ENCODE measurements at regions of chr5 and their contacts with region 1.

Region 1: GRCh38 chr5:115831163-115831768 is 10.1 kb downstream of the ATG12 start:
- DNase-seq: no peak
- H3K4me3 ChIP-seq: no peak overlapping the region
- H3K27ac ChIP-seq: no peak overlapping the region
- H3K4me1 ChIP-seq: peaks cover 0 to 3% of the 10 kb centered on the region in 2 donors
- H3K27me3 ChIP-seq: no peaks in the 10 kb centered on the region
- CTCF ChIP-seq: peak; percentile 48 to 79 (median 75)

Region 2: DNA sequence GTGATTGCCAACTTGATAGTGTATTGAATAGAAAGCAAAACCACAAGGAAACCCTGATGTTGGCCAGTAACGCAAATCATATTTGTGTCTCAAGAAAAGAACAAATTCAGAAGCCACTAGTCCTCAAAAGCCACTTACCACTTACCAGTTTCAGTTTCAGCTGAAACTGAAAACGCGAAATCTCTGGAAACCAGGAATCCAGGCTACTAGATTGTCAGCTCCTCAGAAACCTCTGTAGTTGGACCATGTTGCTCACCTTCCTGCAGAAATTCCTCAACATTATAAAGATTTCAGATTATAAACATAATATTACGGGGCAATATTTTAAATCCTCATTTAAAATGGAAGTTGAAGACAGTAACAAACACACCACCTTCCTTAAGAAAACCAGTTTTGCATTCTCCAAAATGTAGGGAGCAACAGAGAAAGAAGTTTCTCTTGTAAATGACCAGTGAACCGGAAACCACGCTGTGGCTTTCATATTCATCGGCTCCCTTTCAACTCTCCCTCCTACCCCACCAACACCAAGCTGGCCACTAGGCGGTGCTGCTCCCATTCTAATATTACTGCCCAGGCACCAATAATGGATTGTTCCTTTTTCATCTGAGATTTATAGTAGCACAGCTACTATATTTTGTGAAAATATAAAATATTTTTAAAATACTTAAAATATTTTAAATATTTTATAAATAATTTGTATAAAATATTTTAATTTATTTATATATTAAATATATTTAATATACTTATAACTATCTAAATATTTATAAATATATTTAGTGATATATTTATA is 196.7 kb before region 1 on chr5:
- intact Hi-C with region 1: loop called (anchors 2 kb)
- DNase-seq: peak; percentile 24 to 94
- H3K4me3 ChIP-seq: peak overlapping the region; percentile 52 to 59
- H3K27ac ChIP-seq: peak overlapping the region; percentile 40 to 83
- H3K4me1 ChIP-seq: no peaks in the 10 kb centered on the region
- H3K27me3 ChIP-seq: no peaks in the 10 kb centered on the region
- CTCF ChIP-seq: peak; percentile 84 to 89 (median 88)

Region 3: GRCh38 chr5:115810761-115811160 is 20.5 kb before region 1 on chr5:
- intact Hi-C with region 1: no loop called
- DNase-seq: no peak
- H3K4me3 ChIP-seq: no peak overlapping the region
- H3K27ac ChIP-seq: no peak overlapping the region
- H3K4me1 ChIP-seq: no peaks in the 10 kb centered on the region
- H3K27me3 ChIP-seq: no peaks in the 10 kb centered on the region
- CTCF ChIP-seq: no peak

Region 4: GRCh38 chr5:115898656-115899055 is 67.4 kb after region 1 on chr5:
- intact Hi-C with region 1: no loop called
- DNase-seq: no peak
- H3K4me3 ChIP-seq: no peak overlapping the region
- H3K27ac ChIP-seq: no peak overlapping the region
- H3K4me1 ChIP-seq: no peaks in the 10 kb centered on the region
- H3K27me3 ChIP-seq: no peaks in the 10 kb centered on the region
- CTCF ChIP-seq: no peak

Measured in ascending aorta (tissue), 2 donors.